AG04449 (cell line): ENCODE measurements at regions of chr7 and their contacts with region 1.

Region 1: GRCh38 chr7:322111-322671 is 32.2 kb downstream of the FOXL3 start:
- DNase-seq: no peak
- H3K4me3 ChIP-seq: no peak overlapping the region
- CTCF ChIP-seq: peak; percentile 86

Region 2: DNA sequence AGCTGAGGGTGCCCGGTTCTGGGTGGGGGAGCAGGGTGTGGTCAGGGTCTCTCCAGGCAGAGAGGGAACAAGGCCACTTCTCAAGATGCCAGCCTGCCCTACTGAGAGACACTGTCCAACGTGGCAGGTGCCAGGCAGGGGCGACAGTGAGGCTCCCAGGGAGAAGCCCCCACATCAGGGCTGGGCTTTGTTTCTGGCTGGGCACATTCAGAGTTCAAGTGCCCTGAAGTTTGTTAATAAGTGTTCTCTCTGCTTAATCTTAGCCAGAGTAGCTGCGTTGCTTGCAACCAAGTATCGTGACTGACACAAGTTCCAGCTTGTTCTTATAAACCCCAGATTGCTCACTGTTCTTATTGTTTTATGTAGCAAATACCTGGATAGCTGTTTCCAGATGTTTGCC is 10.4 kb before region 1 on chr7:
- CTCF ChIA-PET with region 1: interaction called, 15 read pairs
- POLR2A ChIA-PET with region 1: no interaction called
- DNase-seq: no peak
- H3K4me3 ChIP-seq: no peak overlapping the region
- CTCF ChIP-seq: no peak

Region 3: GRCh38 chr7:332646-333392 is 10.6 kb after region 1 on chr7:
- CTCF ChIA-PET with region 1: interaction called, 17 read pairs
- POLR2A ChIA-PET with region 1: no interaction called
- DNase-seq: no peak
- H3K4me3 ChIP-seq: peak overlapping the region; percentile 3; the same call in 1 of the 2 replicates
- CTCF ChIP-seq: peak; percentile 84

Region 4: GRCh38 chr7:636396-636795 is 314.2 kb after region 1 on chr7:
- CTCF ChIA-PET with region 1: interaction called, 35 read pairs
- POLR2A ChIA-PET with region 1: no interaction called
- DNase-seq: no peak
- H3K4me3 ChIP-seq: no peak overlapping the region
- CTCF ChIP-seq: peak; percentile 51

Region 5: GRCh38 chr7:774161-775109 is 452.2 kb after region 1 on chr7:
- CTCF ChIA-PET with region 1: interaction called, 166 read pairs
- POLR2A ChIA-PET with region 1: no interaction called
- DNase-seq: no peak
- H3K4me3 ChIP-seq: no peak overlapping the region
- CTCF ChIP-seq: peak; percentile 97

Region 6: GRCh38 chr7:786472-787255 is 464.5 kb after region 1 on chr7:
- CTCF ChIA-PET with region 1: interaction called, 10 read pairs
- POLR2A ChIA-PET with region 1: no interaction called
- DNase-seq: no peak
- H3K4me3 ChIP-seq: no peak overlapping the region
- CTCF ChIP-seq: peak; percentile 94

Region 7: DNA sequence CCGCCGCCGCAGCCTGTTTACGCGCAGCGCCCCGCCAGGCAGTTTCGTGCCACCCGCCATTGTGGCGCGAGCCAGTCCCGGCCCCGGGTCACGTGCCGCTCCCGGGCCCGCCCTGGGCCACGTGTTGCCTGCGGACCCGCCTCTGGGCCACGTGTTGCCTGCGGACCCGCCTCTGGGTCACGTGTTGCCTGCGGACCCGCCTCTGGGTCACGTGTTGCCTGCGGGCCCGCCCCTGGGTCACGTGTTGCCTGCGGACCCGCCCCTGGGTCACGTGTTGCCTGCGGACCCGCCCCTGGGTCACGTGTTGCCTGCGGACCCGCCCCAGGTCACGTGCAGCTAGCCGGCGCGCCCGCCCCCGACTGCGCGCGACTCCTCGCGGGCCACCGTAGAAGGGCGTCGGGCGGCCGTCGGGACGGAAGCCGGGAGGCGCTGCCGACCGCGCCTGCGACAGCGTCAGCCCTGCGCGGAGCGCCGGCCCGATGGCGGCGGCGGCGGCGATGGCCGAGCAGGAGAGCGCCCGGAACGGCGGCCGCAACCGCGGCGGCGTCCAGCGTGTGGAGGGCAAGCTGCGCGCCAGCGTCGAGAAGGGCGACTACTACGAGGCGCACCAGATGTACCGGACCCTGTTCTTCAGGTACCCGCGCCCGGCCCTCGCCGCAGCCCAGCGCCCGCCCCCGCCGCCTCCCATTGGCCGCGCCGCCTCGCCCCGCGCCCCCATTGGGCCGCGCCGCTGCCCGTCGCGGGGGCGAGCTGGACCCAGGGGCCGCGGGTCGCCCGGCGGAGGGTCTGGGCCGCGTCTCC is 554.2 kb after region 1 on chr7 and contains the start of gene GET4:
- CTCF ChIA-PET with region 1: interaction called, 15 read pairs
- POLR2A ChIA-PET with region 1: no interaction called
- DNase-seq: peak; percentile 62
- H3K4me3 ChIP-seq: peak within 1 kb of the TSS; percentile 91
- CTCF ChIP-seq: peak; percentile 25